ENCODE measurements at regions of chrX and their contacts with region 1.

Region 1: GRCh38 chrX:155056877-155057792 is 13.8 kb downstream of the CMC4 start:
- DNase-seq: peak; percentile 60
- ATAC-seq: peak; percentile 84
- H3K4me3 Mint-ChIP-seq: peak overlapping the region; percentile 43
- H3K27ac Mint-ChIP-seq: peak overlapping the region; percentile 73
- H3K4me1 Mint-ChIP-seq: peaks cover 28% of the 10 kb centered on the region
- H3K27me3 Mint-ChIP-seq: no peaks in the 10 kb centered on the region
- CTCF ChIP-seq: peak; percentile 61

Region 2: DNA sequence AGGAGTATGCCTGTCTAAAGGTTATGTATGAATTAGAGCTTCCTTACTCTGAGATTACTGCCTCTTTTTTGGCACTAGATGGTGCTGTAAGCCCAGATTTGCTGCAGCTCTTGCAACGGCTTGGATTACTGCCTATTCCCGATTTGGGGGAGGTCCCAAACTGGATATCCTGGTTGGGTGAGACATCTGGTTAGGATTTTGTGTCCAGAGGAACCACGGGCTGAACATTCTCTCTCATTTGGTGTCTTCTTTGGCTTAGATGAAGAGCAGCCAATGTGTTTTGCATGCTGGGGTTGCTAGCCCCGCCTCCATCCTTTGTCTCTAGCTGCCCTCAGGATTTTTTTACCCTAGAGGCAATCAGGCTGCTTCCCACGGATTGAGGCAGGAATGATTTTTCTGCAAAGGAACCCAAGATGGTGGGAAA is 139.1 kb before region 1 on chrX:
- CTCF ChIA-PET with region 1: interaction called, 18 read pairs
- POLR2A ChIA-PET with region 1: interaction called, 3 read pairs
- intact Hi-C with region 1: no loop called
- DNase-seq: peak; percentile 25
- ATAC-seq: peak; percentile 67
- H3K4me3 Mint-ChIP-seq: peak overlapping the region; percentile 50
- H3K27ac Mint-ChIP-seq: no peak overlapping the region
- H3K4me1 Mint-ChIP-seq: peaks cover 2% of the 10 kb centered on the region
- H3K27me3 Mint-ChIP-seq: peaks cover 2% of the 10 kb centered on the region
- CTCF ChIP-seq: peak; percentile 70

Region 3: DNA sequence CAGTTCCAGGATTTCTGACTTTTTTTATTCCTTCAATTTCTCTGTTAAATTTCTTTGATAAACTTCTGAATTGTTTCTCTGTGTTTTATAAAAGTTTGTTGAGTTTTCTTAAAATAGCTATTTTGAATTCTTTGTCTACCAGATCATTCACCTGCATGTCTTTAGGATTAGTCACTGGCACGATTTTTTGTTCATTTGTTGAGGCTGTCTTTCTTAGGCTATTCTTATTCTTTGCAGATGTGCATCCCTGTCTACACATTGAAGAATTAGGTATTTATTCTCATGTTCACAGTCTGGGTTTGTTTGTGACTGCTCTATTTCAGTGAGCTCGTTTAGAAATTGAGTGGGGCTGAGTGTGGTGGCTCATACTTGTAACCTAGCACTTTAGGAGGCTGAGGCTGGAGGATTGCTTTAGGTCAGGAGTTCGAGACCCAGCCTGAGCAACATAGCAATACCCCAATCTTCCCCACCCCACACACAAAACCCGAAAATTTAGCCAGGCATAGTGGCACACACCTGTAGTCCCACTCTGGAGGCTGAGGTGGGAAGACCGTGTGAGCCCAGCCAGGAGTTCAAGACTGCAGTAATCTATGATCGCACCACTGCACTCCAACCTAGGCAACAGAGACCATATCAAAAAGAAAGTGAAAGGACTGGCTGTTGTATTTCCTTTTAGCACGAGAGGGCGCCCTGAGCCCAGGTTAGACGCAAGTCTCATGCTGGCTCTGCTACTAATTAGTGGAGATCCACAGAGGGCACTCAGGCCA is 76.6 kb before region 1 on chrX:
- CTCF ChIA-PET with region 1: interaction called, 67 read pairs
- POLR2A ChIA-PET with region 1: interaction called, 3 read pairs
- intact Hi-C with region 1: loop called (anchors 1 kb)
- DNase-seq: peak; percentile 87
- ATAC-seq: peak; percentile 99
- H3K4me3 Mint-ChIP-seq: peak overlapping the region; percentile 73
- H3K27ac Mint-ChIP-seq: peak overlapping the region; percentile 76
- H3K4me1 Mint-ChIP-seq: peaks cover 5% of the 10 kb centered on the region
- H3K27me3 Mint-ChIP-seq: no peaks in the 10 kb centered on the region
- CTCF ChIP-seq: peak; percentile 47

Region 4: GRCh38 chrX:154986826-154987576 is 70.1 kb before region 1 on chrX:
- CTCF ChIA-PET with region 1: interaction called, 67 read pairs
- POLR2A ChIA-PET with region 1: interaction called, 3 read pairs
- intact Hi-C with region 1: no loop called
- DNase-seq: no peak
- ATAC-seq: no peak
- H3K4me3 Mint-ChIP-seq: no peak overlapping the region
- H3K27ac Mint-ChIP-seq: no peak overlapping the region
- H3K4me1 Mint-ChIP-seq: peaks cover 17% of the 10 kb centered on the region
- H3K27me3 Mint-ChIP-seq: peaks cover 3% of the 10 kb centered on the region
- CTCF ChIP-seq: no peak

Region 5: DNA sequence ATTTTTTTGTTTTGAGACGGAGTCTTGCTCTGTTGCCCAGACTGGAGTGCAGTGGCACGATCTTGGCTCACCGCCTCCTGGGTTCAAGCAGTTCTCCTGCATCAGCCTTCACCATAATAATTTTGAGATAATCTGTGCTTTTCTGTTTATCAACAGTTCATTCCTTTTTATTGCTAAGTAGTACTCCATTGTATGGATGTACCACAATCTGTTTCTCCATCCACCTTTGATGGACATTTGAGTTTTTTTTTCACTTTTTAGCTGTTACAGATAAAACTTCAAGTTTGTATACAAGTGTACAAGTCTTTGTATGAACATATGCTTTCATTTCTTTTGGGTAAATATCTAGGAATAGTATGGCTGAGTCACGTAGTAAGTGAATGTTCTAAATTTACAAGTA is 21.4 kb before region 1 on chrX:
- CTCF ChIA-PET with region 1: interaction called, 11 read pairs
- POLR2A ChIA-PET with region 1: no interaction called
- intact Hi-C with region 1: no loop called
- DNase-seq: no peak
- ATAC-seq: no peak
- H3K4me3 Mint-ChIP-seq: no peak overlapping the region
- H3K27ac Mint-ChIP-seq: no peak overlapping the region
- H3K4me1 Mint-ChIP-seq: peaks cover 19% of the 10 kb centered on the region
- H3K27me3 Mint-ChIP-seq: no peaks in the 10 kb centered on the region
- CTCF ChIP-seq: no peak

Region 6: GRCh38 chrX:155046129-155046810 is 10.9 kb before region 1 on chrX:
- CTCF ChIA-PET with region 1: interaction called, 17 read pairs
- POLR2A ChIA-PET with region 1: no interaction called
- intact Hi-C with region 1: no loop called
- DNase-seq: no peak
- ATAC-seq: no peak
- H3K4me3 Mint-ChIP-seq: no peak overlapping the region
- H3K27ac Mint-ChIP-seq: no peak overlapping the region
- H3K4me1 Mint-ChIP-seq: peaks cover 44% of the 10 kb centered on the region
- H3K27me3 Mint-ChIP-seq: no peaks in the 10 kb centered on the region
- CTCF ChIP-seq: no peak

Region 7: GRCh38 chrX:155406429-155406828 is 349.3 kb after region 1 on chrX:
- CTCF ChIA-PET with region 1: no interaction called
- POLR2A ChIA-PET with region 1: no interaction called
- intact Hi-C with region 1: no loop called
- DNase-seq: no peak
- ATAC-seq: no peak
- H3K4me3 Mint-ChIP-seq: no peak overlapping the region
- H3K27ac Mint-ChIP-seq: no peak overlapping the region
- H3K4me1 Mint-ChIP-seq: no peaks in the 10 kb centered on the region
- H3K27me3 Mint-ChIP-seq: no peaks in the 10 kb centered on the region
- CTCF ChIP-seq: no peak

Measured in activated CD8-positive, alpha-beta T cell treated with anti-CD3 and anti-CD28 coated beads for 36 hours (primary cell).